Cardiac septum (tissue), 1 donor: ENCODE measurements at regions of chr11 and their contacts with region 1.

Region 1: GRCh38 chr11:130861902-130862860 is 54.1 kb downstream of the SNX19 start:
- DNase-seq: peak; percentile 96

Region 2: DNA sequence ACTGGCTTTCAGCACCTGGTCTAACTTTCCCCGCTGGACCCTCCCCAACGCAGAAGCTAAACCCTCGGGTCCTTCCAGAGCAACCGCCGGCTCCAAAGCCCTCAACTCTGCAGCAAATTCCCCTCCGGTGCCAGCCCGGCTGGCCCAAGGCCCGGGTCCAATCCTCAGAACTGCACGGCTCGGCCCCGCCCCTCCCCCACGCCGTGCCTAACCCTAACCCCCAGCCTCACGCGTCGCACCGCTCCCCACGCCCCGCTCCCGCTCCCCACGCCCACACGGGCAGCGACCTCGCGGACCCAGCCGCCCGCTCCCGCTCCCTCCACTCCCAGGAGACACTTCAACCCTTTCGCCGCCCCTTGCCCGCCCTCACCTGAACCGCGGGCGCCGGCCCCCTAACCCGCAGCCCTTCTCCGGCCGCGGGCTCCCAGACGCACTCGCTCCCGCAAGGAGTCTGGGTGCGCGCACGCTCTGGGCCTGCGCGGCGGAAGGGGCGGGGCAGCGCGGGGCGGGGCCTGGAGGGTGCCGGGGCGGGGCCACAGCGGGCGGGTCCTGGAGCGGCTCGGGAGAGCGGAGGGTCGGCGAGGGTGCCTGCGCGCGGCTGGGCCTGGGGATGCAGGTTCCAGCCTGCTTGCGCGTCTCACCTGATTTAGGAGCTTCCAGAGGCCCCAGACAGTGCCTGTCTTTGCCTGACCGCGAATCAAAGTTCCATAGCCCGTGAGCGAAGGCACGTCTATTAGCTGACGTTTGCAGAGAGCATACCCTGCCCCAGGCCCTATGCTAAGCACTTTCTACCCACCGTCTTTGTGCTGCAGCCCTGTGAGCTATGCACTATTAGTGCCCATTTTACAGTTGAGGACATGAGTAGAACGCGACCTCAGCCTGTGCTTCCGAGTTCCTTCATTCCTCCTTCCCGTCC is 966.8 kb before region 1 on chr11 and contains the start of gene NFRKB:
- intact Hi-C with region 1: no loop called
- DNase-seq: peak; percentile 96
- total RNA-seq, gene NFRKB: 12.1 TPM

Region 3: DNA sequence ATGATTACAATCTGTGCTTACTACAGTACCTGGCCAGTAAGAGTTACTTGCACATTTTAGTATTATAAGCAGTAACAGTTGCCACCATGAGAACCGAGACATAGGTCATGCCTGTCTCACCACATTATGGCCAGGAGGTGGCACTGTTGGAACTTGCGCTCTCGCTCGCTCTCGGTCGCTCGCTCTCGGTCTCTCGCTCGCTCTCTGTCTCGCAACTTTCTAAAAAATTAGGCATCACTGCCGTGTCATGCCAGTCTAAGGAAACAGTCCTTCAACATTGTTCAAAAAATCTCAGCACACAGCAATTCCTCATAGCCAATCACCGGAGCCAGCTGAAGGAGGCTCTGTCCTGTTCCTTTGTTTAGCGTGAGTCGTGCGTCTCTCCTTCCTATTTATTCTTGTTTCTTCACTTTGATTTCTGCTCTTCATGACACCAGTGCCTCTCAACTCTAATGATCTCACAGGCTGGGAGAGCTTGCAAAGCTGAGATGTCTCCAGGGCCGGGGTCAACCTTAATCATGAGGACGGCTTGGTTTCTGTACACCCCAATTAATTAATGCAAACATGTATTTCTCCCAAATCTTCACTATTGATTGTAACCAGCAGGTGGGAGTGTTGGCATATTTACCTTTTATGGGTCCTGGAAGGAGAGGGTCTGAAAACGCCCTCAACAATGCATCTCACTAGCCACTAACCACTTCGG is 427.5 kb before region 1 on chr11:
- intact Hi-C with region 1: loop called (anchors 1 kb)
- DNase-seq: peak; percentile 87